ENCODE measurements at regions of chr14 and their contacts with region 1.

Region 1: DNA sequence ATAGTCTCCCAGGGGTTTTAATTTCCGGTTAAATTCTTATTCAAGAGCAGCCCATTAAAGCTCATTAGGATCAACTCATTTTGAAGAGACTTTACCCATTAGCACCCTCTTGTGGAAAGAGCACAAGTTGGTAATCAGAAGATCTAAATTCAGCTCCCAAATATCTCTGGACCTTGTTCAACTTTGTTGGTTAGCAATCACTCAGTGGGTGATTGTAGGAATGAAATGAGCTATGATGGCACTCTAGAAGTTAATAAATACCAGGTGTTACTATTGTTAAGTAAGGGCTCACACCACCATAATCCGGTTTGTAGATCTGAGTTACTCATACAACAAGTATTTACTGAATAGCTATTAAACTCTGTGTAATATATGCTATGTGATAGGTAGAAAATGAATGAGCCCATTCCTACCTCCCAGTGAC is 42.9 kb downstream of the TRIP11 start:
- DNase-seq: peak; percentile 85
- H3K4me3 ChIP-seq: no peak overlapping the region
- H3K27ac ChIP-seq: peak overlapping the region; percentile 45
- H3K4me1 ChIP-seq: peaks cover 44% of the 10 kb centered on the region
- H3K27me3 ChIP-seq: no peaks in the 10 kb centered on the region
- CTCF ChIP-seq: peak; percentile 39 to 48
- POLR2A ChIP-seq: no peak

Region 2: GRCh38 chr14:91836119-91836881 is 160.7 kb before region 1 on chr14:
- CTCF ChIA-PET with region 1: interaction called, 5 read pairs
- POLR2A ChIA-PET with region 1: no interaction called
- dilution Hi-C with region 1: no loop called
- intact Hi-C with region 1: loop called (anchors 5 kb)
- DNase-seq: no peak
- H3K4me3 ChIP-seq: no peak overlapping the region
- H3K27ac ChIP-seq: no peak overlapping the region
- H3K4me1 ChIP-seq: no peaks in the 10 kb centered on the region
- H3K27me3 ChIP-seq: peaks cover 22 to 46% of the 10 kb centered on the region in 2 experiments
- CTCF ChIP-seq: no peak
- POLR2A ChIP-seq: no peak

Region 3: GRCh38 chr14:91882369-91882768 is 114.6 kb before region 1 on chr14:
- CTCF ChIA-PET with region 1: no interaction called
- POLR2A ChIA-PET with region 1: no interaction called
- dilution Hi-C with region 1: no loop called
- intact Hi-C with region 1: no loop called
- DNase-seq: no peak
- H3K4me3 ChIP-seq: no peak overlapping the region
- H3K27ac ChIP-seq: no peak overlapping the region
- H3K4me1 ChIP-seq: no peaks in the 10 kb centered on the region
- H3K27me3 ChIP-seq: no peaks in the 10 kb centered on the region
- CTCF ChIP-seq: no peak
- POLR2A ChIP-seq: no peak

Region 4: GRCh38 chr14:91911474-91912032 is 85.4 kb before region 1 on chr14:
- CTCF ChIA-PET with region 1: interaction called, 19 read pairs
- POLR2A ChIA-PET with region 1: no interaction called
- dilution Hi-C with region 1: no loop called
- intact Hi-C with region 1: no loop called
- DNase-seq: peak; percentile 49
- H3K4me3 ChIP-seq: no peak overlapping the region
- H3K27ac ChIP-seq: no peak overlapping the region
- H3K4me1 ChIP-seq: no peaks in the 10 kb centered on the region
- H3K27me3 ChIP-seq: no peaks in the 10 kb centered on the region
- CTCF ChIP-seq: peak; percentile 25 to 62
- POLR2A ChIP-seq: no peak

Region 5: DNA sequence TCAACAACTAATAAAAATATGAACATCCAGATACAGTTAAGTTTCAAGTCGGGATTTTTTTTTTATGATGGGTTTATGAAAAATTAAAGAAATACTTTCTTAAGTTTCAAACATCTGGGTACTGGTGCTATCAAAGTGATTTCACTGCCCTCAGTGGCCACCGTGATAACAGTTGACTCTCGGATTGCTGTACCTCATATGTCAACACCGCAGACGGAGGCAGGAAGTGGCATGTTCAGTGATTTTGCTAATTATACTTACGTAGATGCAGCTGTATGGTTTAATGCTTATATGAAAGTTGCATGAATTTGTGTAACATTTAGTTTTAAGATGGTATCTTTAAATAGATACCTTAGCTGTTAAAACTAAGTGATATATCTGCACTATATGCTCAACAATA is 28.7 kb before region 1 on chr14:
- CTCF ChIA-PET with region 1: interaction called, 13 read pairs
- POLR2A ChIA-PET with region 1: no interaction called
- dilution Hi-C with region 1: no loop called
- intact Hi-C with region 1: no loop called
- DNase-seq: no peak
- H3K4me3 ChIP-seq: no peak overlapping the region
- H3K27ac ChIP-seq: no peak overlapping the region
- H3K4me1 ChIP-seq: no peaks in the 10 kb centered on the region
- H3K27me3 ChIP-seq: no peaks in the 10 kb centered on the region
- CTCF ChIP-seq: no peak
- POLR2A ChIP-seq: no peak

Region 6: GRCh38 chr14:92014040-92014439 is 17.1 kb after region 1 on chr14:
- CTCF ChIA-PET with region 1: interaction called, 13 read pairs
- POLR2A ChIA-PET with region 1: no interaction called
- dilution Hi-C with region 1: no loop called
- intact Hi-C with region 1: no loop called
- DNase-seq: no peak
- H3K4me3 ChIP-seq: no peak overlapping the region
- H3K27ac ChIP-seq: no peak overlapping the region
- H3K4me1 ChIP-seq: no peaks in the 10 kb centered on the region
- H3K27me3 ChIP-seq: no peaks in the 10 kb centered on the region
- CTCF ChIP-seq: no peak
- POLR2A ChIP-seq: no peak

Region 7: DNA sequence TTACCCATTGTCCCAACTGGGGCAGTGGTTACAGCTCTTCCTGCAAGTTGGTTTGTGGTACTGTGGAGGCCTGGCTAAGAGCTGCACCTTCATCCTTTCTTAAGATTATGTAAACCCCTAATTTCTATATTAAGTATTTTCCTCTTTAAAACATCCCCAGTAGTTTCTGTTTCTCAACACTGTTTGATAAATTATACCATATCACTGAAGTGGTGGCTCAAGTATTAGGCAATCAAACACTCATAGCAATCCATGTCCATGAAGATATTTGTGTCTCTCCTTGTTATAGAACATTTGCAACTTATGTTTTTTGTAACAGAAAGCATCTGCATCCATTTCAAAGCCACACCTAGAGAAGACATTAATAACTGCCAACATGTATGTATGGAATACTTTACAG is 77.6 kb after region 1 on chr14:
- CTCF ChIA-PET with region 1: no interaction called
- POLR2A ChIA-PET with region 1: no interaction called
- dilution Hi-C with region 1: no loop called
- intact Hi-C with region 1: no loop called
- DNase-seq: no peak
- H3K4me3 ChIP-seq: no peak overlapping the region
- H3K27ac ChIP-seq: no peak overlapping the region
- H3K4me1 ChIP-seq: no peaks in the 10 kb centered on the region
- H3K27me3 ChIP-seq: no peaks in the 10 kb centered on the region
- CTCF ChIP-seq: no peak
- POLR2A ChIP-seq: no peak

Region 8: DNA sequence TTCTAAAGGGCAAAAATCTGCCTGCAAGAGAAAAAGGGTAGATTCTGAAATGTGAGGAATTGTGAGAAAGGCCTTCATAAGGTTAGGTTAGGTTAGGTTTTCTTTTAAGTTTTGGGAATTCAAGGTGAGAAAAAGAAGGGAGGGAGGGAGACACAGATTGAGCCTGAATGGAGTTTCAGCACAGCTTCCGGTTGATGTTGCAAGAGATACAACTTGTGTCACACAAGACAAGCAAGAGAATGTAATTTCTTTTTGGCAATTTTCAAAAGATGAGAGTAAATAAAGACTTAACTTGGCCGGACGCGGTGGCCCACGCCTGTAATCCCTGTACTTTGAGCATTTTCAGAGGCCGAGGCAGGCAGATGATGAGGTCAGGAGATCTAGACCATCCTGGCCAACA is 188.6 kb after region 1 on chr14:
- CTCF ChIA-PET with region 1: no interaction called
- POLR2A ChIA-PET with region 1: no interaction called
- dilution Hi-C with region 1: no loop called
- intact Hi-C with region 1: no loop called
- DNase-seq: no peak
- H3K4me3 ChIP-seq: no peak overlapping the region
- H3K27ac ChIP-seq: no peak overlapping the region
- H3K4me1 ChIP-seq: no peaks in the 10 kb centered on the region
- H3K27me3 ChIP-seq: no peaks in the 10 kb centered on the region
- CTCF ChIP-seq: no peak
- POLR2A ChIP-seq: no peak

Region 9: GRCh38 chr14:92768795-92769194 is 771.8 kb after region 1 on chr14:
- CTCF ChIA-PET with region 1: no interaction called
- POLR2A ChIA-PET with region 1: no interaction called
- dilution Hi-C with region 1: no loop called
- intact Hi-C with region 1: no loop called
- DNase-seq: no peak
- H3K4me3 ChIP-seq: no peak overlapping the region
- H3K27ac ChIP-seq: no peak overlapping the region
- H3K4me1 ChIP-seq: no peaks in the 10 kb centered on the region
- H3K27me3 ChIP-seq: no peaks in the 10 kb centered on the region
- CTCF ChIP-seq: no peak
- POLR2A ChIP-seq: no peak

Measured in endothelial cell of umbilical vein (primary cell).